Caco-2 (cell line): ENCODE measurements at regions of chr1 and their contacts with region 1.

Region 1: GRCh38 chr1:9494929-9495758 is 44.1 kb upstream of the SLC25A33 start:
- DNase-seq: peak in 1 of 2 experiments; percentile 76
- H3K4me3 ChIP-seq: peak overlapping the region; percentile 34
- H3K4me3 Mint-ChIP-seq: peak overlapping the region; percentile 70
- H3K27ac Mint-ChIP-seq: no peak overlapping the region
- H3K4me1 ChIP-seq: no peaks in the 10 kb centered on the region
- H3K4me1 Mint-ChIP-seq: peaks cover 9% of the 10 kb centered on the region
- H3K27me3 ChIP-seq: no peaks in the 10 kb centered on the region
- H3K27me3 Mint-ChIP-seq: no peaks in the 10 kb centered on the region
- CTCF ChIP-seq: peak; percentile 83 to 96

Region 2: GRCh38 chr1:8789314-8790214 is 705.6 kb before region 1 on chr1:
- CTCF ChIA-PET with region 1: no interaction called
- POLR2A ChIA-PET with region 1: no interaction called
- intact Hi-C with region 1: no loop called
- DNase-seq: peak; percentile 87 to 91
- H3K4me3 ChIP-seq: peak overlapping the region; percentile 4; the same call in 1 of the 2 replicates
- H3K4me3 Mint-ChIP-seq: peak overlapping the region; percentile 72
- H3K27ac Mint-ChIP-seq: peak overlapping the region; percentile 93
- H3K4me1 ChIP-seq: peaks cover 30% of the 10 kb centered on the region
- H3K4me1 Mint-ChIP-seq: peaks cover 31% of the 10 kb centered on the region
- H3K27me3 ChIP-seq: no peaks in the 10 kb centered on the region
- H3K27me3 Mint-ChIP-seq: no peaks in the 10 kb centered on the region
- CTCF ChIP-seq: no peak

Region 3: DNA sequence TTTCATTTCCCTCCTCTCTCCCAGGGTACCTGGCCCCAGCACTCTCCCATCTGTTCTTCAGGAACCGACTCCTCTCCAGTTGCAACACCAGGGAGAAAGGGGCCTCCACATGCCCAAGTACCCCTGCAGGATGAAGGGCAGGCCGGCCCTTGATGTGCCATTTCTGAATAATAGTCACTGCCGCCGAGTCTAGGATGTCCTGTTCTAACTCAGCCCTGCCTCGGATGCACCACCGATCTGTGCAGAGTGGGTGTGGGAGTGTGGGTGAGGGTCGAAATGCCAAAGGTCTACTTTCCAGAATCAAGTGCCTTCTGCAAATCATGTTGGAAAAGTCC is 227.8 kb before region 1 on chr1:
- CTCF ChIA-PET with region 1: interaction called, 12 read pairs
- POLR2A ChIA-PET with region 1: no interaction called
- intact Hi-C with region 1: loop called (anchors 2 kb)
- DNase-seq: no peak
- H3K4me3 ChIP-seq: no peak overlapping the region
- H3K4me3 Mint-ChIP-seq: no peak overlapping the region
- H3K27ac Mint-ChIP-seq: peak overlapping the region; percentile 31
- H3K4me1 ChIP-seq: no peaks in the 10 kb centered on the region
- H3K4me1 Mint-ChIP-seq: no peaks in the 10 kb centered on the region
- H3K27me3 ChIP-seq: no peaks in the 10 kb centered on the region
- H3K27me3 Mint-ChIP-seq: no peaks in the 10 kb centered on the region
- CTCF ChIP-seq: no peak

Region 4: DNA sequence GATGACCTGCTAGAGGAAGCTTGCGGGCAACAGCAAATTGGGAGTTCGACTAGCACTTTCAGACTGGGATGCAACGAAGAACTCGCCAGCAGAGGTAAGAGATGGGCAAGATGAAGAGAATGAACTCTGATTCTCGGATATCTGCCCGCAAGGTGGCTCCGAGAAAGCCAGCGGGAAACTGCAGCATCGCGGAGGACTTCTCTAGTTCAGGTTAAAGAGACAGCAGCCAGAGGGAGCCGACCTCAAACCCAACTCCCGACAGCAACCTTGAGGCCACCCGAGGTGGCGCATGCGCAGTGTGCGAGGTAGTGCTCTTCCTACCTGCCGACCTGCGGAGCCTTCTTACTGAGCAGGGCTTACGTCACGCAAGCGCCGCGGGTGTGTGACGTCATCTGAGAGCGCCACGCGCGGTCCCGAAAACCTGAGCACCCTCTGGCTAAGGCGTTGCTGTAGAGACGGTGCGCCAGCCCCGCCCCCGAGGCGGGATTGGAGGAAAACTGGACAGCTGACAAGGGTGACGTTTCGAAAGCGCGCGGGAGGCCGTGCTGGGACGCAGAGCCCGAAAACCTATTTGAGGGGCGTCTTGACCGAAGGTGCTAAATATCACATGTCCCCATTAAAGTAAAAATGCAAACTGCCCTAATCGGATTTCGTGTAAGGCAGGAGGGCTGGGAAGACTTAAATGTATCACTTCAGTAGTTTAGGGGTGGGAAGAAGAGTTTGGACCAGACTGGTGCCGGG is 66.4 kb before region 1 on chr1:
- CTCF ChIA-PET with region 1: no interaction called
- POLR2A ChIA-PET with region 1: no interaction called
- intact Hi-C with region 1: loop called (anchors 1 kb)
- DNase-seq: peak; percentile 99
- H3K4me3 ChIP-seq: peak overlapping the region; percentile 58
- H3K4me3 Mint-ChIP-seq: peak overlapping the region; percentile 77
- H3K27ac Mint-ChIP-seq: peak overlapping the region; percentile 85
- H3K4me1 ChIP-seq: peaks cover 6% of the 10 kb centered on the region; the same call in 1 of the 2 replicates
- H3K4me1 Mint-ChIP-seq: peaks cover 9% of the 10 kb centered on the region
- H3K27me3 ChIP-seq: no peaks in the 10 kb centered on the region
- H3K27me3 Mint-ChIP-seq: no peaks in the 10 kb centered on the region
- CTCF ChIP-seq: peak; percentile 13 to 58

Region 5: GRCh38 chr1:9441451-9442133 is 53.6 kb before region 1 on chr1:
- CTCF ChIA-PET with region 1: no interaction called
- POLR2A ChIA-PET with region 1: no interaction called
- intact Hi-C with region 1: no loop called
- DNase-seq: no peak
- H3K4me3 ChIP-seq: no peak overlapping the region
- H3K4me3 Mint-ChIP-seq: no peak overlapping the region
- H3K27ac Mint-ChIP-seq: peak overlapping the region; percentile 10
- H3K4me1 ChIP-seq: peaks cover 55% of the 10 kb centered on the region
- H3K4me1 Mint-ChIP-seq: peaks cover 32% of the 10 kb centered on the region
- H3K27me3 ChIP-seq: no peaks in the 10 kb centered on the region
- H3K27me3 Mint-ChIP-seq: no peaks in the 10 kb centered on the region
- CTCF ChIP-seq: no peak

Region 6: GRCh38 chr1:9549955-9550546 is 54.9 kb after region 1 on chr1:
- CTCF ChIA-PET with region 1: no interaction called
- POLR2A ChIA-PET with region 1: no interaction called
- intact Hi-C with region 1: no loop called
- DNase-seq: no peak
- H3K4me3 ChIP-seq: no peak overlapping the region
- H3K4me3 Mint-ChIP-seq: no peak overlapping the region
- H3K27ac Mint-ChIP-seq: no peak overlapping the region
- H3K4me1 ChIP-seq: peaks cover 5% of the 10 kb centered on the region; the same call in 1 of the 2 replicates
- H3K4me1 Mint-ChIP-seq: no peaks in the 10 kb centered on the region
- H3K27me3 ChIP-seq: no peaks in the 10 kb centered on the region
- H3K27me3 Mint-ChIP-seq: no peaks in the 10 kb centered on the region
- CTCF ChIP-seq: no peak

Region 7: DNA sequence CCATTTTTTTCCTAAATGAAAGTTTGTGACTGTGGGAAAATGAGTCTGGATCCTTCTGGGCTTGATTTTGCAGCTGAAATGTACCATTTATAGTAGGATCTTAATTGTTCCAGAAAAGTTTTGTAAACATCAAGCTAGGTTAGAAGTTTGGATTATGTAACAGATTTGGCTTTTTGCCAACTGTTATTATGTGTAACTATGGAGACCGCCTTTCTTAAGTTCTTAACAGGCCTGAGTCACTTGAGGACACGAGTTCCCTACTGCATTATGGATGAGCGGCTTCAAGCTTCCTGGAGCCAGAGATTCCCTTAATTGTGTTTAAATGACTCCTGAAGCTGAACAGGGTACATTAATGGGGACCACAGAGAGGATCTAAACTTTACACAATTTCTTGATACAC is 66.3 kb after region 1 on chr1:
- CTCF ChIA-PET with region 1: no interaction called
- POLR2A ChIA-PET with region 1: no interaction called
- intact Hi-C with region 1: no loop called
- DNase-seq: peak in 1 of 2 experiments; percentile 15
- H3K4me3 ChIP-seq: no peak overlapping the region
- H3K4me3 Mint-ChIP-seq: no peak overlapping the region
- H3K27ac Mint-ChIP-seq: no peak overlapping the region
- H3K4me1 ChIP-seq: peaks cover 8% of the 10 kb centered on the region; the same call in 1 of the 2 replicates
- H3K4me1 Mint-ChIP-seq: peaks cover 10% of the 10 kb centered on the region
- H3K27me3 ChIP-seq: no peaks in the 10 kb centered on the region
- H3K27me3 Mint-ChIP-seq: no peaks in the 10 kb centered on the region
- CTCF ChIP-seq: no peak

Region 8: DNA sequence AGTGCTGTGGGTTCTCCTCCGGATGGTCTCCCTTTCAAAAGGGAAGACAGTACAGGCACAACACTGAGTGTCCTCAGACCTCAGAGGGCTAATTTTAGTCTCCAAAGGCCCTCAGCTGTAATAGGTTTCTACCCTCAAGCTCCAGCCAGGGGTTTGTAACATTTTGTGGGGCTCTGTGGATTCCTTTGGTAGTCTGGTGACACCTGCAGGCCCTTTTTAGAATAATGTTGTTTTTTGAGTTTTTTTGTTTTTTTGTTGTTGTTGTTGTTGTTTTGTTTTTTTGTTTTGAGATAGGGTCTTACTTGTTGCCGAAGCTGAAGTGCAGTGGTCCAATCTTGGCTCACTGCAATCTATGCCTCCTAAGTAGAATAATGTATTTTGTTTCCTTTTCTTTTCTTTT is 78.6 kb after region 1 on chr1:
- CTCF ChIA-PET with region 1: interaction called, 4 read pairs
- POLR2A ChIA-PET with region 1: no interaction called
- intact Hi-C with region 1: loop called (anchors 1 kb)
- DNase-seq: peak in 1 of 2 experiments; percentile 13
- H3K4me3 ChIP-seq: no peak overlapping the region
- H3K4me3 Mint-ChIP-seq: no peak overlapping the region
- H3K27ac Mint-ChIP-seq: no peak overlapping the region
- H3K4me1 ChIP-seq: no peaks in the 10 kb centered on the region
- H3K4me1 Mint-ChIP-seq: peaks cover 6% of the 10 kb centered on the region
- H3K27me3 ChIP-seq: no peaks in the 10 kb centered on the region
- H3K27me3 Mint-ChIP-seq: no peaks in the 10 kb centered on the region
- CTCF ChIP-seq: peak; percentile 14 to 19